GM10248 (cell line): ENCODE measurements at regions of chr3 and their contacts with region 1.

Region 1: DNA sequence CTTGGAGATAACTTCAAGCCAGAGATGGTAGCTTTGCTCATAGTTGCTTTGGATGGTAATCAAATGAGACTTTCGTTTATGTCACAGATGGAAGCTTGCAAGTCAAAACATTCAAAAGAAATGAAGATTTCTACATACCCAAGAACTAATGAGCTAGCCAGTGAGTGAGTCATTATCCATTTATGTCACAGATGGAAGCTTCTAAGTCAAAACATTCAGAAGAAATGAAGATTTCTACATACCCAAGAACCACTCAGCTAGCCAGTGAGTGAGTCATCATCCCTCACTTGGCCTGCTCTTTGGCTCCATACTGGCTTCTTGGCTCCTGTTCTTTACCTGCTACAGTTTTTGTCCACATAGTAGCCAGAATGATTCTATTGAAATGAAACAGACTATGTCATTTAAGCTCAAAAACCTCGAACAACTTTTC is 559.8 kb upstream of the CBLB start:
- DNase-seq: no peak
- CTCF ChIP-seq: no peak

Region 2: DNA sequence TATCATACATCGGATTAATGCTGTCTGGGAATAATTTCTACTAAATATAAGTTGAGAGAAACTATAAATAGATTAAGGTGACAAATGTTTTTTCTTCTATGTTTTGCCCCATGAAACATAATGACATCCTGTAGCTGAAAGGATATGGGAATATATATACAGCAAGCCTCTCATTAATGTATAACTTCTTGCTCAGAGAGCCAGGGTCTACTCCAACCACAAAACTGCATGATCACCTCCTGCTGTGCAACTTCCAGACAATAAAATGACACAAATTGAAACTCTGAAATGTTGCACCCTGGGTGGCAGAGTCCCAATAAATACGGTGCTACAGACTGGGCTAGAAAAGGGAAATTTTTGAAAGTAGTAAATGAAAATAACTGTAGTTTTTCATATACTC is 12.1 kb after region 1 on chr3:
- CTCF ChIA-PET with region 1: interaction called, 14 read pairs
- POLR2A ChIA-PET with region 1: no interaction called
- DNase-seq: no peak
- CTCF ChIP-seq: no peak